ENCODE measurements at regions of chr1 and their contacts with region 1.

Region 1: GRCh38 chr1:179637211-179637860 is 45.7 kb downstream of the TDRD5 start:
- DNase-seq: no peak
- H3K4me3 ChIP-seq: no peak overlapping the region
- CTCF ChIP-seq: no peak

Region 2: DNA sequence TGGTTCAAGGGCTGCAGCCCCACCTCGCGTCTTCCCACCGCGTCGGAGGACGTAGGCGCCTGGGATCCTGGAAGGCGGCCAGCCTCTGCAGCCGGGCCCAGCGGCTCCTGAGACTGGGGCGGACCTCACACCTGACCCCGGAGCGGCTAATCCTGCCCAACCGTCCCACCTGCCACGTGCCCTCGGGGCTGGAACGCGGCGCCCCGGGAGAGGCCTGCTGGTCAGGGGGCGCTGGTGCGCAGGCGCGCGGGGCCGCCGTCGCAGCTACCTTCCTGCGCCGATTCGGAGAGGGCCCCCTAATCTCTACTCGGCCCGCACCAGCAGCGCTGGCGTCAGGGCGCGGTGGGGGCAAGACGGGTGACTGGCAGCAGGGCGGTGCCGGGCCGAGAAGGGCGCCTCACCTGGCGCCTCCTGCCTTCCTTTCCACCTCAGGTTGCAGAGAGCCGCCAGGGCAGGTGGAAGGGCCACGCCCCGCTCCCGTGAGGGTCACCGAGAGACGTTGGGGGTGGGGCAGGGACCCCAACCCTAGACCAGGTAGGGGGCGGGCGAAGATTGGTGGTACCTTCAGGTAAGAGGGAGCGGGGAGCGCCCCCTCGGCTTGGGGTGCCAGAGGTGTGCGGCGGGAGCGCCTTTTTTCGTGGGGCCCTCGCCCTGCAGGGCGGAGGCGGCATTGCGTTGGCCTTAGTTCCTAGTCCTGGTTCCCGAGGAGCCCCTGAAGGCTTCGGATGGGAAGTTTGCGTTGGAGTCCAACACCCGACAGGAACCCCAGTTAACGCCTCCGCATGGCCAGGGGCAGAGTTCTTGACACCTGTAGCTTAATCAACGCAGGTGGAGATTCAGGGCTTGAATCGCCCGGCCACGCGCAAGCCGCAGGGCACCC is 45.5 kb before region 1 on chr1 and contains the start of gene TDRD5:
- in situ Hi-C with region 1: no loop called
- DNase-seq: no peak
- H3K4me3 ChIP-seq: peak within 1 kb of the TSS; percentile 18
- CTCF ChIP-seq: no peak

Region 3: DNA sequence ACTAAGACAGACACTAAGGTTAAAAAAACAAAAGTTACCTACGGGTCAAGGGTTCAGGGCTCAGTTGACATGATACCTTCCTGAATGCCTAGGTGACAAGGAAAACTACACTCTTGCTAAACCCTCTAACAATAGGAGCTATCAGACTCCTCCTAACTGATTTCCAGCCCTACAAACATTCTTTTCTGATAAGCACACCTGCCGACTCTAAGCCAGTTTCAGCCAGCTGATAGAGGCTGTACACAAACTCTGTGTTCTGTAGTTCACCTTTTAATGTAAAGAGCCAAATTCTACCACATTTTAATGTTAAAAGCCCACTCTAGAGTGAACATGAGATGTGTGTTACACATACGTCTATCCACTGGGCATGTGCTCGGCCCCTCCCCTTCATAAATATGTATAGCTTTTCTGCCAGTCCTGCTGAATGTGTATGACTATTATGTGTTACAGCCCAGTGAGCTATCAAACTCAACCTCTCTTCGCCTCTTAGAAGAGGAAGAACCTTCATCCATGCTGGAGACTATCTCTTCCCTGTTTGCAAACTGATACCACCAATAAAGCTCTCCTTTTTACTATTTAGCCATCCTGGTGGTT is 65.7 kb after region 1 on chr1:
- in situ Hi-C with region 1: loop called (anchors 10 kb)
- DNase-seq: no peak
- H3K4me3 ChIP-seq: no peak overlapping the region
- CTCF ChIP-seq: no peak

Measured in astrocyte of the cerebellum (primary cell).